Ascending aorta (tissue), 2 donors: ENCODE measurements at regions of chr11 and their contacts with region 1.

Region 1: GRCh38 chr11:124837491-124837856 is 27.8 kb upstream of the ROBO3 start:
- DNase-seq: no peak
- H3K4me3 ChIP-seq: no peak overlapping the region
- H3K27ac ChIP-seq: peak overlapping the region in 1 of 2 donors; percentile 84
- H3K4me1 ChIP-seq: peaks cover 11 to 14% of the 10 kb centered on the region in 2 donors
- H3K27me3 ChIP-seq: peaks cover 21% of the 10 kb centered on the region
- CTCF ChIP-seq: peak in 2 of 3 experiments; percentile 25 to 35

Region 2: DNA sequence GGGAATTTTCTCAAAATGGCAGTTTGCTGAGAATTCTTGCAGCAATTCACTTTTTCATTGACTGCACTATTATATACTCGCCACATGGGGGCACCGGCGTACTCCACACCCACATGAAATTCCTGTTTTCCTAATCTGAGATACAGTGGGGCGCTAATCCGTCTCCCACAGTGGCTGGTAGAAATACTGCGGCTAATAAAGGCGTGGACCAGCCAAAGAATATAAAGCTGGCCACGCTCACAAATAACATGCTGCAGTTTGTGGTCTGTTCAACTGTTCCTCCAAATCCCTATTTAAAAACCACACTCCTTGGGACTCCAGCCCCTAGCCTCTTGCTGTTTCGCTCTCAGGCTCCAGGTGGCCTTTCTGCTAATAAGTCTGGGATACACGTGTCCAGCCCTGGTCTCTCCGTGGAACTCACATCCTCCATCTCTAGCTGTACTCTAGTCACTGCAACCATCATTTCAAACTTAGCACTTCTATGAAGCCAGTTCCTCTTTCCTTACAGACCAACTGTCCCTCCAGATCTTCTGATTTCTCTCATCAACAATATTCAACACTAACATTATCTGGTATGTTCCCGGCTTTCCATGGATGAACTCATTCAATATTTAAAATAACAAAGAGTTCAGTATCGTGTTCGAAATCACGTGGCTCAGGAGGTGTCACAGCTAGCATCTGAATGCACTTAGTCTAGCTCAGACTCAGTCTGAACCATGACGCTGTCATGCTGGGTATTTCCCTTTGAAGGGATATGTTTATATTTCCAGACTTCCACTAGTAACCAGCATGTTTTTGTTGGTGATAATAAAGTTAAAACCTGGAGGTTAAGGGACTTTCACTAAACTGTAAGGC is 192.8 kb before region 1 on chr11:
- intact Hi-C with region 1: loop called (anchors 1 kb)
- DNase-seq: peak in 1 of 2 donors; percentile 79
- H3K4me3 ChIP-seq: peak overlapping the region in 1 of 2 donors; percentile 52
- H3K27ac ChIP-seq: peak overlapping the region; percentile 78 to 85
- H3K4me1 ChIP-seq: peaks cover 0 to 3% of the 10 kb centered on the region in 2 donors
- H3K27me3 ChIP-seq: no peaks in the 10 kb centered on the region
- CTCF ChIP-seq: peak; percentile 71 to 82 (median 75)

Region 3: DNA sequence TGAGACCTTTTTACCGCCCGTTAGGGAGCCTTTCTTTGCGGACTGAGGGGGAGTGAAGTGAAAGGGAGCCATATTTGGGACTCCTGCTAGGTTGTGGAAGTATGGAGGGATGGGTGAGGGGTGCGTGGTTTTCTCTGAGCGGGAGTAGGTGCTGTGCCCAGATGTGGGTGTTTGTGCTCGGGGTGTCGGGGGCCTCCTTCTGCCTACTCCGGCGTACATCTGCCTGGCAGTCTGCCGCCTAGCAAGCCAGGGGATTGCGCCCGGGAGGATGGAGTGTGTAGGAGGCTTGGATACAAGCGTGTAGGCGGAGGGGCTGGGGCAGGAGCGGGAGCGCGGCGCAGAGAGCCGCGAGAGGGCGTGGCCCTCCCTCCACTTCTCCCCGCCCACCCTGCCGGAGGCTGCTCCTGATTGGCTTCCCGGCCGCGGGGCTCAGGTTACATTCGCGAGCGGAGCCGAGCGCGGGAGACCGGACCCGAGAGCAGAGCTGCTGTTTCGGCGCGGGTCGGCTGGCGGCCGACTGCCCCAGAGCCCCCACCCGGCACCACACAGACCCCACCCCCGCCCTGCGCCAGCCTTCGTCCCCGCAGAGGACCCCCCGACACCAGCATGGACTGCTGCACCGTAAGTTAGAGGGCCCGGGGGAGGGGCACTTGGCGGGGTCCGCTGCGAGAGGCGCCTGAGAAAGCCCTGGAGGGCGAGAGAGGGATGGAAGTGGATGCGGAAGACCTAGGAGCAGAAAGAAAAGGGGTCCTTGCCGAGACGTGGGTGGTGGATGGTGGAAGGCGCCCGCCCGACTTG is 97.8 kb before region 1 on chr11 and contains the start of gene NRGN:
- intact Hi-C with region 1: loop called (anchors 5 kb)
- DNase-seq: peak; percentile 76 to 94
- H3K4me3 ChIP-seq: peak within 1 kb of the TSS; percentile 63 to 89
- H3K27ac ChIP-seq: peak within 1 kb of the TSS; percentile 28 to 78
- H3K4me1 ChIP-seq: peaks cover 13% of the 10 kb centered on the region in 2 donors
- H3K27me3 ChIP-seq: no peaks in the 10 kb centered on the region
- CTCF ChIP-seq: no peak
- total RNA-seq, gene NRGN: 5.3 TPM

Region 4: DNA sequence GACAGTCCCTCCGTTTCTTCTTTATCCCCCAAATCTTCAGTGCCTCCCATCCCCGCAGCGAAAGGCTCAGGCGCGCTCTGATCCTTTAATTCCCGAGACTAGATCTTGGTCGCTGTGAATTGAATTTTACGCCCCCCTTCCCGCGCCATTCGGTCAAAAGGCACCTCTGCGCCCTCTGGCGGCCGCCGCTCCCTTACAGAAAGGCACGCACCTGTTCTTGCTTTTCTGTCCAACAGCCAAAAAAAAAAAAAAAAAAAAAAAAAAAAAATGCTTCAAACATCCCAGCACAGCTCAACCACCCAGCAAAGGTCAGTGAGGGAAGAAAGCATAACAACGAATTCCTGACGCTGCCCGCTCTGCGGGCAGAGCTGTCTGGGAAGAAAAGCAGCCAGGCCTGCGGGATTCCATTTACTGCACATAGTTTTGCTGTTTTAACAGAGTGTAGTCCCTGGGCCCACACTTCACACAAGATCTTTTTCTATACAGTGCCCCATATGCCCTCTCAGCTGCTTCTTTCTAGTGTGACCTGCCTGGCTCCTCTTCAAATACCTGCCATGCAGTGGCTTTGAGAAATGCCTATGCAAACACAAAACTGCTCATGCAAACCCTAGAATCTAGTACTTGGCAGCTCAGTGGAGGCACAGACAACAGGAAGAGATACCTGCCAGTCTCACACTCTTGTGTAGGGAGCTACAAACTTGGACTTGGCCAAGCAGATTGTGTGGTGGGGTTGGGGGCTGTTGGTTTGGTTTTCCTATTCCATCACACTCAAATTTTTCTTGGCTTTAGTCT is 74.1 kb before region 1 on chr11:
- intact Hi-C with region 1: loop called (anchors 2 kb)
- DNase-seq: peak in 1 of 2 donors; percentile 92
- H3K4me3 ChIP-seq: peak overlapping the region; percentile 62 to 67
- H3K27ac ChIP-seq: peak overlapping the region; percentile 79 to 85
- H3K4me1 ChIP-seq: peaks cover 3 to 21% of the 10 kb centered on the region in 2 donors
- H3K27me3 ChIP-seq: no peaks in the 10 kb centered on the region
- CTCF ChIP-seq: peak; percentile 26 to 75 (median 68)

Region 5: GRCh38 chr11:124800226-124800929 is 37.1 kb before region 1 on chr11 and contains the start of gene MSANTD2:
- intact Hi-C with region 1: loop called (anchors 1 kb)
- DNase-seq: peak; percentile 19 to 87
- H3K4me3 ChIP-seq: peak within 1 kb of the TSS; percentile 81 to 98
- H3K27ac ChIP-seq: peak within 1 kb of the TSS; percentile 99
- H3K4me1 ChIP-seq: peaks cover 13 to 16% of the 10 kb centered on the region in 2 donors
- H3K27me3 ChIP-seq: no peaks in the 10 kb centered on the region
- CTCF ChIP-seq: no peak
- total RNA-seq, gene MSANTD2: 21.4 TPM

Region 6: GRCh38 chr11:124865921-124866583 is 28.6 kb after region 1 on chr11:
- intact Hi-C with region 1: loop called (anchors 2 kb)
- DNase-seq: no peak
- H3K4me3 ChIP-seq: peak overlapping the region; percentile 31 to 51
- H3K27ac ChIP-seq: no peak overlapping the region
- H3K4me1 ChIP-seq: peaks cover 4 to 17% of the 10 kb centered on the region in 2 donors
- H3K27me3 ChIP-seq: peaks cover 17% of the 10 kb centered on the region
- CTCF ChIP-seq: peak; percentile 48 to 81 (median 80)

Region 7: DNA sequence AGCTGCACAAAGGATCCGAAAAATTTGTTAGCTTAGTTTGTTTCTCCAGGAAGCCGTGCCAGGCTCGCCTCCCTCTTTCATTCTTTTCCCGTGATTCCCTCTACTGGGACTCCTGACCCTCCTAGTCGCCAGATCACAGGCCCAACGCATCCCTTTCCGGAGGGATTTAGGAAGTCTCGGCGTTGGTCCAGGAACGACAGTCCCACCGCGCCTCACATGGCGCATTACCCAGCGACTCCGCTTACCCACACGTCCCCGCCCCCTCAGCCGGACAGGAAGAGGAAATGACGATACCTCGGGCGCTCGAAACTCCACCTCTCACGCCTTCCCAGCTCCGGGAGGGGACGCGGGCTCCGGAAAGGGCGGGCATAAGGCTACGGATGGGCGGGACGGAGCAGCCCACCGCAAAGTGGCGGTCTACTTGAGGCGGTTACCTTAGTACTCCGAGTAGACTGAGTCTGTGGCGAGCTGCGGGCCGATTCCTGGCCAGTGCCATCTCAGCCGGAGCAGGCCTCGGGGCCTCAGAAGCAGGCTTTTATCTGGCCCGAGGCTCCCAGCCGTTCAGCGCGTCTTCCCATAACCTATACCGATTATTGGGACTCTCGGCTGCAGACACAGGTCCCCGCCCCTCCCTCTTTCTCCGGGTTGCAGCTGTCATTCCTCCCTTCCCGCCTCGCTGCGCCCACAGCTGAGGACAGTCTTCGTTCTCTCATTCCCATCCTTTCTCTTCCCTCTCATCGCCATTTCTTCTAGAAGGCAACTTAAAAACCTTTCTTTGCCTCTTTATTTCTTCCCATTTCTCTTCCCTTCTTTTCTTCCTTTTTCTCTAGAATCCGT is 116.5 kb after region 1 on chr11 and contains the start of gene CCDC15:
- intact Hi-C with region 1: loop called (anchors 1 kb)
- DNase-seq: peak; percentile 88 to 98
- H3K4me3 ChIP-seq: peak within 1 kb of the TSS; percentile 62 to 71
- H3K27ac ChIP-seq: peak within 1 kb of the TSS; percentile 68 to 78
- H3K4me1 ChIP-seq: peaks cover 0 to 8% of the 10 kb centered on the region in 2 donors
- H3K27me3 ChIP-seq: no peaks in the 10 kb centered on the region
- CTCF ChIP-seq: no peak
- total RNA-seq, gene CCDC15: not detected